Esophagus muscularis mucosa (tissue), 4 donors: ENCODE measurements at regions of chr19 and their contacts with region 1.

Region 1: GRCh38 chr19:44903602-44904425 is 1.8 kb upstream of the APOE start:
- DNase-seq: peak; percentile 93
- H3K4me3 ChIP-seq: no peak overlapping the region
- H3K27ac ChIP-seq: no peak overlapping the region
- H3K4me1 ChIP-seq: peaks cover 9 to 31% (median 22%) of the 10 kb centered on the region in 4 donors
- H3K27me3 ChIP-seq: peaks cover 7 to 46% (median 25%) of the 10 kb centered on the region in 4 donors
- CTCF ChIP-seq: peak in 2 of 3 experiments; percentile 96 to 99
- EP300 ChIP-seq: no peak
- POLR2A ChIP-seq: no peak

Region 2: DNA sequence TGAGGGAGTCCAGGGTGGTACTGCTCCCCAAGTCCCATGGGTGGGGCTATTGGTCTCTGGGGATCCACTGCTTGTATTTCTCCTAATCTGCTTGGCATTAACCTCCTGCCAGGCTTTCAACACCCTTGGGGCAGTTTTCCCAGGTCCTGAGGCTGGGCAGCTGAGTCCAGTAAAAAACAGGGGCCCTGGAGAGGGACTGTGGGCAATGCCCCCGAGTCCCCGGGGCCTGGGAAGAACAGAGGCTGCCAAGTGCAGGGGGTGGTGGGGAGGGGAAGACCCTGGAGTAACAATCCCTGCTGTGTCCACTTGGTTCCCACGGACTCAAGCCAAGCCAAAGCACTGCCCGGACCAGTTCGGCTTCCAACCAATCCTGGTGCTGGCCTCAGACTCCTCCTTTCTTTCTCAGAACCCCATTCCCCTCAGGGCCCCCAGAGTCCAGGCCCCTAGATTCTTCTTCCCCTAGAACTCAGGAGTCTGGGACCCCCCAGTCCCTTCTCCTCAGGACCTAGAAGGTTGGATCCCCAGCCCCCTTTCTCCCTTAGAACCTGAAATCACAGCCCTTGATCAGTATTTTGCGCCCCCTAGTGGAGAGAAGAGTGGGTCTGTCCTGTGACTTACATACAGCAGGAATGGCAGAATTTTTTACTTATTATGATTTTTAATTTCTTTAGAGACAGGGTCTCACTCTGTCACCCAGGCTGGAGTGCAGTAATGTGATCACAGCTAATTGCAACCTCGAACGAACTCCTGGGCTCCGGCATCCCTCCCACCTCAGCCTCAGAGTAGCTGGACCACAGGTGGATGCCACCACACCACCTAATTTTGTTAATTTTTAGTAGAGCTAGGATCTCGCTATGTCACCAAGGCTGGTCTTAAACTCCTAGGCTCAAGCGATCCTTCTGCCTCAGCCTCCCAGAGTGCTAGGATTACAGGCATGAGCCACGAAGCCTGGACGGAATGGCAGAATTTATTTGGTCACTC is 47.7 kb after region 1 on chr19:
- intact Hi-C with region 1: loop called (anchors 1 kb)
- DNase-seq: no peak
- H3K4me3 ChIP-seq: no peak overlapping the region
- H3K27ac ChIP-seq: peak overlapping the region in 3 of 4 donors; percentile 33 to 46 (median 36)
- H3K4me1 ChIP-seq: peaks cover 24 to 42% (median 39%) of the 10 kb centered on the region in 4 donors
- H3K27me3 ChIP-seq: no peaks in the 10 kb centered on the region
- CTCF ChIP-seq: peak; percentile 79 to 83 (median 80)
- EP300 ChIP-seq: no peak
- POLR2A ChIP-seq: no peak

Region 3: DNA sequence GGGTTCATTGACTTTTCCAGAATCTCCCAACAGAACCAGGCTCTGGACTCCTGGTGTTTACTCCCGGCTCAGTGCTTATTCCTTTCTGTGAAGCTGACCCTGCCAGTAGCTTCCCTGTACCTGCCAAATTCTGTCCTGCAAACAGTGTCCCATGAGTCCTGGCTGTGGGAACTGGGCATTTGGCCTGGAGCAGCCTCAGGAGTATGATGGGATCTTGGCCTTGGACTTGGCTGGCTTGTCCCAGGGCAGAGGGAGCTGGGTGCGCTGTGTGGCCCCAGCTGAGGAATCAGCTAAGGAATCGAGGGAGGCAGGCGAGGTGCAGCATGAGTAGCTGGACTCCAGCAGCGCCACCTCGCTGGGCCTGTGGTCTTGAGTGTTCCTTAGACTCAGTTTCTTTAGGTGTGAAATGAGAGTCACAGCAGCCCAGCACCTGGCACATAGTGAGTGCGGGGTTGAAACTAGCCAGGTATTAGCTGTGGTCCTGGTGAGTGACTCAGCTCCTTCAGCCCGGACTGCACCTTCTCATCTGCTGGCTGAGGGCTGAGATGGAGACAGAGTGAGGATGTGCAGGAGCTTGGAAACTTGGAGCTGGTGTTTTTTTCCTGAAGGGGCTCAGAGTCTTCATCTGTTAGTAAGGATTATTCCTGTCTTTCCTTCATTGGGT is 145.4 kb after region 1 on chr19:
- intact Hi-C with region 1: no loop called
- DNase-seq: no peak
- H3K4me3 ChIP-seq: no peak overlapping the region
- H3K27ac ChIP-seq: peak overlapping the region in 3 of 4 donors; percentile 17 to 48 (median 20)
- H3K4me1 ChIP-seq: peaks cover 39 to 81% (median 61%) of the 10 kb centered on the region in 4 donors
- H3K27me3 ChIP-seq: no peaks in the 10 kb centered on the region
- CTCF ChIP-seq: no peak
- EP300 ChIP-seq: no peak
- POLR2A ChIP-seq: no peak

Region 4: DNA sequence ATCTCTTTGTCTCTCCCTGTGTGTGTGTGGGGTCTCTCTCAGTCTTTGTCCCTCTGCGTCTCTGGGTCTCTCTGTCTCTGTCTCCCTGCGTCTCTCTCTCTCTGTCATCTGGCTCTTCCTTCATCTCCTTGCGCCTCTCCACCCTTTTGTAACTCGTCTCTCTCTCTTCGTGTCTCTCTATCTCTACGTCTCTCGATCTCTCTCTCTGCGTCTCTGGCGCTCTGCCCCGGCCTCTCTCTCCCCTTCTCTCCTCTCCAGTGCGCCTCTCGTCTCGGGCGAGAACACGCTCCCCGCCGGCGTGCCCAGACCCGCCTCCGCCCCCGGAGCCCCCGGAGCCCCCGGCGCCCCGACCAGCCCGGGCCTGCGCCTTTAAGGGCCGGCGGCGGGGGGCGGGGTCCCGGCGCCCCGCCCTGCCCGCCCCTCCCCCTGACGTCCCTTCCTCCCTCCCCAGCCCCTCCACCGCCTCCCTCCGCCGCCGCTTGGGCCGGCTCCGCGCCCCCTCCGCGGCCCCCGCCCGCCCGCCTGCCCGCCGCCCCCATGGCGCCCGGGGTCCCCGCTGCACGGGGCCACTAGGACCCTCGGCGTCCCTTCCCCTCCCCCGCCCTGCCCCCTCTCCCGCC is 347.1 kb after region 1 on chr19 and contains the start of gene MARK4:
- intact Hi-C with region 1: loop called (anchors 5 kb)
- DNase-seq: no peak
- H3K4me3 ChIP-seq: peak within 1 kb of the TSS; percentile 94 to 99 (median 98)
- H3K27ac ChIP-seq: peak within 1 kb of the TSS; percentile 80 to 86 (median 83)
- H3K4me1 ChIP-seq: peaks cover 31 to 62% (median 54%) of the 10 kb centered on the region in 4 donors
- H3K27me3 ChIP-seq: no peaks in the 10 kb centered on the region
- CTCF ChIP-seq: no peak
- EP300 ChIP-seq: no peak
- POLR2A ChIP-seq: no peak
- total RNA-seq, gene MARK4: 17.4 to 36.9 (median 27.5) TPM

Region 5: DNA sequence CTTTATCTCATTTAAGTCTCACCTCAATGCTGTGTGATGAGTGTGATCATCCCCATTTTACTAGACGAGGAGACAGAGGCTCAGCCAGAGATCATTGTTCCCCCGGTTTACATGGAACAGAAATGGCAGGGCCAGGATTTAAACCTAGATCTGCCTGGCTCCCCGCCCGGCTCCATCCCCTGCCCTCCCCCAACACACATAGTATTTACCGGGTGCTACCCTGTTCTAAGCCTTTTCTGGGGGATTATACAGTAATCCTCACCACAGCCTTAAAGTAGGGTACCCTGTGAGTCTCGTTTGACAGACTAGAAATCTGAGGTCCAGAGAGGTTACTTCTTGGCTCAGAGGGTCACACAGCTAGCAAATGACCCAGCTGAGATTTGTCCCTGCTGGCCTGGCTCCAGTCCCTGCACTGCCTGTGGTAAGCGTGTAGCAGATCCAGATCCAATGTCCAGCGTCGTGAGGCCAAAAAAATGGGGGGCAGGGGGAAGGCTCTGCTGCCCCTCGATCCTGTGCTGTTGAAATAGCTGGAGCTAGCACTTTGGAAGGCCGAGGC is 433.0 kb after region 1 on chr19:
- intact Hi-C with region 1: loop called (anchors 5 kb)
- DNase-seq: no peak
- H3K4me3 ChIP-seq: no peak overlapping the region
- H3K27ac ChIP-seq: no peak overlapping the region
- H3K4me1 ChIP-seq: peaks cover 4 to 21% (median 15%) of the 10 kb centered on the region in 4 donors
- H3K27me3 ChIP-seq: peaks cover 5 to 37% (median 16%) of the 10 kb centered on the region in 4 donors
- CTCF ChIP-seq: no peak
- EP300 ChIP-seq: no peak
- POLR2A ChIP-seq: no peak